Panc1 (cell line): ENCODE measurements at regions of chr3 and their contacts with region 1.

Region 1: DNA sequence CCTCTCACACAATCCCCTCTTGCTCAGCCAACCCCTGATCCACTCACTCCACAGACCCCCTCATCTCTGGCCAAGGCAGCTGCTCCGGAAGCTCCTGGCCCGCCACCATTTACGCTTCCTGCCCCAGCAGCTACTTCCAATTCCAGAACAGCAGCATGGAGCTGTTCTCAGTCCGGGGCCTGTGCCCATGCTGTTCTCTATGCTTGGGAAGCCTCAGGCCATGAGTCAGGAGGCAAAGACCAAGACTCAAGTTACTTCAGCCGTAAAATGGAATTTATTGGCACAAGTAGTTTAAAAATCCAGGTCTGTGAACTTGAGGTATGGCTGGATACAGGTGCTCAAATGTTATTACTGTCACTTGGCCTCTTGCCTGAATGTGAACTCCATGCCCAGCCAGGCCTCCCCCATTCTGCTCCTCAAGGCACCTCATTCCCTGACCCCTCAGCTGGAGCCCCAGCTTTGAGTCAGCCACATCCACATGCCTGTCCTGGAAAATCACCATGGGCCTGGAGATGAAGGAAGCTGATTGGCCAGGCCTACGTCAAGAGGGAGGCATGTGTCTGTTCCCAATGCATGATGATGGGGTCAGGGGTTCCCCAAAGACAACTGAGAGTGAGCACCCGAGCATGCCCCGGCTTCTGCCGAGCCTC is 31.4 kb upstream of the CACNA2D2 start:
- DNase-seq: no peak
- ATAC-seq: no peak
- H3K4me3 ChIP-seq: no peak overlapping the region
- H3K27ac ChIP-seq: no peak overlapping the region
- H3K4me1 ChIP-seq: no peaks in the 10 kb centered on the region
- H3K27me3 ChIP-seq: no peaks in the 10 kb centered on the region
- CTCF ChIP-seq: no peak

Region 2: DNA sequence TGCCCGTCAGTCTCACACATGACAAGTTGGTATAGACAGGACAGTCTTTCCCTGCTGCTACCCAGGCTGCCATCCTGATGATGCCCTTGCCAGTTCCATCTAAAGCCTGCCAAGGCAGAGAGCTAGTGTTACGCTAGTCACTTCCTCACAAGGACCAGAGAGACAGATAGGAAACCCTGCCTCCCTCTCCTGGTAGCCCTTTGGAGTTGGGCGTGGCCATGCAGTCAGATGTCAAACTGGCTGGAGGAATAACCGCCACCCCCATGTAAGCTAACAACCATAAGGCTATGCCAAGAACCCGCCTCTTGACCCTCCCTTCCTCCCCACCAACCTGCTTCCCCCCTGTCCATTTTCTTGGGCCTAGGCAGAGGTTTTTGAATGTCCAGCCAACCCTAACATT is 178.3 kb before region 1 on chr3:
- CTCF ChIA-PET with region 1: no interaction called
- POLR2A ChIA-PET with region 1: no interaction called
- in situ Hi-C with region 1: no loop called
- intact Hi-C with region 1: no loop called
- DNase-seq: no peak
- ATAC-seq: no peak
- H3K4me3 ChIP-seq: peak overlapping the region; percentile 71 to 79
- H3K27ac ChIP-seq: no peak overlapping the region
- H3K4me1 ChIP-seq: peaks cover 16% of the 10 kb centered on the region
- H3K27me3 ChIP-seq: no peaks in the 10 kb centered on the region
- CTCF ChIP-seq: no peak

Region 3: DNA sequence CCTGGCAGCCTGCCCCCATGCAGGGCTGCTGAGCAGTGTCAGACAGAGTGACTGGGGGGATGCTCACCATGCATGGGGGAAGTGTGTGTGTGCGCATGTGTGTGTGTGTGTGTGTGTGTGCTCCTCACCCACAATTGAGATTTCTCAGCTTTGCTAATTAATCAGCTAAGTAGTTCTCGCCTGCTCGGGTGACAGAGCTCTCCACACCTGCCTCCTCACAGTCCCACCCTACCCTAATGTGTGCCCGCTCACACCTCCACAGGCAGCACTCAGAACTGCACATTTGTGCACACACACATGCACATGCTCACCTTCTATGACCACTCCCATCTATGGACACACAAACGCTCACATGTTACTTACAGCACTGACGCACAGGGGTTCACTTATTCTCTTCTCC is 68.6 kb before region 1 on chr3:
- CTCF ChIA-PET with region 1: interaction called, 10 read pairs
- POLR2A ChIA-PET with region 1: no interaction called
- in situ Hi-C with region 1: no loop called
- intact Hi-C with region 1: no loop called
- DNase-seq: no peak
- ATAC-seq: no peak
- H3K4me3 ChIP-seq: no peak overlapping the region
- H3K27ac ChIP-seq: no peak overlapping the region
- H3K4me1 ChIP-seq: no peaks in the 10 kb centered on the region
- H3K27me3 ChIP-seq: no peaks in the 10 kb centered on the region
- CTCF ChIP-seq: no peak